ENCODE measurements at regions of chr6 and their contacts with region 1.

Region 1: GRCh38 chr6:27177485-27178406 is 69.8 kb upstream of the PRSS16 start:
- DNase-seq: peak; percentile 88
- H3K4me3 ChIP-seq: peak overlapping the region; percentile 34 to 94 (median 77)
- H3K27ac ChIP-seq: peak overlapping the region; percentile 41
- H3K4me1 ChIP-seq: no peaks in the 10 kb centered on the region
- H3K27me3 ChIP-seq: peaks cover 8 to 18% of the 10 kb centered on the region in 2 experiments
- CTCF ChIP-seq: peak; percentile 45 to 60
- POLR2A ChIP-seq: no peak

Region 2: DNA sequence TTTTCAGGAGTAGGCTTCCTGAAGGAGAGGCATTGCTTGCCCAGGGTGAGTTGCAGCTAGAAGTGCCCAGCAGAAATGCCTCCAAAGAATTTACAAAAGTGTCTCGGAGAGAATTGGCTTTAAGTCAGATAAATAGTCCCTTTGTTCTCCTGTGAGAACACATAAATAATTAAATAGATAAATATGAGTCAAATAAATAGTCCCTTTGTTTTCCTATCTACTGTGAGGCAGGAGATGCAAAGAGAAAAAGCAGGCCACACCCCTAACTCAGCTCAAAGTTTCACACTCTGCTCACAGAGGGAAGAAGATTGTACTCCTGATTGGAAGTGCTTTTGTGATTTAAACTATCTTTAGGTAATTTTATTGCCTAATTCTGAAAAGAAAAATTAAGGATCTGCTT is 110.9 kb before region 1 on chr6:
- CTCF ChIA-PET with region 1: no interaction called
- POLR2A ChIA-PET with region 1: no interaction called
- dilution Hi-C with region 1: no loop called
- intact Hi-C with region 1: no loop called
- DNase-seq: no peak
- H3K4me3 ChIP-seq: no peak overlapping the region
- H3K27ac ChIP-seq: no peak overlapping the region
- H3K4me1 ChIP-seq: no peaks in the 10 kb centered on the region
- H3K27me3 ChIP-seq: peaks cover 6 to 8% of the 10 kb centered on the region in 2 experiments
- CTCF ChIP-seq: no peak
- POLR2A ChIP-seq: no peak

Region 3: DNA sequence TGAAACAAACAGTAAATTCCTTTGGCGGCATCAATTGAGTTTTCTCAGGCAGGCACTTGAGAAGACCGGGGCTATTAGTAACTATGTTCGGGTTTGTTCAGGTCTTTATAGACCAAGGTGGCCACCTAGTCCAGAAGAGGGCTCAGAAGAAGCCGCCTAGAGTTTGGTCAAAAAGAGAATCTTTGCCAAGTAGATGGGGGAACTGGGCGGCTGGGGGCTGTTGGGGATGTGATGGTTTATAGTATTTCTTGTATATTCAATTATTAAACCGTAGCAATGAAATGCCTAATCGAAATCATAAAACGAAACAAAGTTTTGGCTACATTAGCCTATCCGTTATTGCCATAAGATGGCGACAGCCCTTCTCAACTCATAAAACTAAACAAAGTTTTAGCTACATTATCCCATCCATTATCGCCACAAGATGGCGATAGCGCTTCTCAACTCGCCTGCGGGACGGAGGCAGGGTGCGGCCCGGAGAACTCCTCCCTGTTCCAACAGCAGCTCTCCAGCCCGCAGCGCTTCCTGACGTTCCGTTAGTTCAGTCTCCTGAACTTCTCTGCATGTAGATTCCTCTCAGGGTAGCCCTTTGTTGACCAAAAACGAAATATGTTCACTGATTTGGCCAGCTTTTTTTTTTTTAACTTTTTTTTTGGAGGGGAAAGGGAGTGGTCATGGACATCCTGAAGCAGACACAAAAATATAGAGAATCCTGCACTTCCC is 50.8 kb before region 1 on chr6:
- CTCF ChIA-PET with region 1: interaction called, 11 read pairs
- POLR2A ChIA-PET with region 1: interaction called, 4 read pairs
- dilution Hi-C with region 1: no loop called
- intact Hi-C with region 1: loop called (anchors 2 kb)
- DNase-seq: peak; percentile 92
- H3K4me3 ChIP-seq: peak overlapping the region in 2 of 3 experiments; percentile 24 to 28
- H3K27ac ChIP-seq: no peak overlapping the region
- H3K4me1 ChIP-seq: peaks cover 10% of the 10 kb centered on the region
- H3K27me3 ChIP-seq: no peaks in the 10 kb centered on the region
- CTCF ChIP-seq: peak; percentile 71 to 73
- POLR2A ChIP-seq: peak; percentile 46

Region 4: DNA sequence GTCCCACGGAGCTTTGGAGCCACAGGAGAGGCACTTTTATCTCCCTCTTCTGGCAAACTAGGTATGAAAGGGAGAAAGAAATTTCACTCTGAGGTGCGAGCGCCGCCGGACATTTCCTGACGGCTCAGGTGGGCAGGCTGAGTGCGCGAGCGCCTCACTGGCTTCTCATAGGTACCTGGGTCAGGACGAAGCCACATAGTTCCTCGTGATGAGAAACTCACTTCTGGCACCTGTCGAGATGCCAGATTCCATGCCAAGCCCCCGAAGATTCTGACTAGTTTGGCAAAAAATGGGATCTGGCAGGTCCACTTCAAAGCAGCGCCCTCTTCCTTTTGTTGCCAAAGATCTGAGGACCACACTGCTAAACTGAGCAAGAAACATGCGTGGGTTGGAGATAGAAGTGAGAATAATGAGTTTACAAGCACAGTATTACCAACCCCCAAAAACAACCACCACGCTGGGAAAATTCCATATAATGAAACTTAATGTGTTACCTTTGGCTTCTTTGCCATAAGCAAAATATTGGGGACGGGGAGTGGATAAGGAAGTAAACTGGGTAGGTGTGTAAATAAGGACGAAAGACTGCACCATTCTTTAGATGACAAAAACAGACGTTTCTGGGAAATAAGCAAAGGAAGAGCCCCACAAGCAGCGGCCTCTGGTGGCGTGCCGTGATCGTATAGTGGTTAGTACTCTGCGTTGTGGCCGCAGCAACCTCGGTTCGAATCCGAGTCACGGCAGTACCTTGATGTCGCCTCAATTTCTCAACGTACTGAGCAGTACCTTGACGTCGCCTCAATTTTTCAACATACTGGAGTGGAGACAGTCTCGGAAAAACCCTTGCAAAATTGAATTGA is 20.1 kb before region 1 on chr6:
- CTCF ChIA-PET with region 1: interaction called, 20 read pairs
- POLR2A ChIA-PET with region 1: no interaction called
- dilution Hi-C with region 1: no loop called
- intact Hi-C with region 1: loop called (anchors 1 kb)
- DNase-seq: peak; percentile 57
- H3K4me3 ChIP-seq: peak overlapping the region; percentile 30 to 64 (median 59)
- H3K27ac ChIP-seq: no peak overlapping the region
- H3K4me1 ChIP-seq: peaks cover 10% of the 10 kb centered on the region
- H3K27me3 ChIP-seq: peaks cover 8 to 11% of the 10 kb centered on the region in 2 experiments
- CTCF ChIP-seq: peak; percentile 42 to 63
- POLR2A ChIP-seq: no peak

Region 5: DNA sequence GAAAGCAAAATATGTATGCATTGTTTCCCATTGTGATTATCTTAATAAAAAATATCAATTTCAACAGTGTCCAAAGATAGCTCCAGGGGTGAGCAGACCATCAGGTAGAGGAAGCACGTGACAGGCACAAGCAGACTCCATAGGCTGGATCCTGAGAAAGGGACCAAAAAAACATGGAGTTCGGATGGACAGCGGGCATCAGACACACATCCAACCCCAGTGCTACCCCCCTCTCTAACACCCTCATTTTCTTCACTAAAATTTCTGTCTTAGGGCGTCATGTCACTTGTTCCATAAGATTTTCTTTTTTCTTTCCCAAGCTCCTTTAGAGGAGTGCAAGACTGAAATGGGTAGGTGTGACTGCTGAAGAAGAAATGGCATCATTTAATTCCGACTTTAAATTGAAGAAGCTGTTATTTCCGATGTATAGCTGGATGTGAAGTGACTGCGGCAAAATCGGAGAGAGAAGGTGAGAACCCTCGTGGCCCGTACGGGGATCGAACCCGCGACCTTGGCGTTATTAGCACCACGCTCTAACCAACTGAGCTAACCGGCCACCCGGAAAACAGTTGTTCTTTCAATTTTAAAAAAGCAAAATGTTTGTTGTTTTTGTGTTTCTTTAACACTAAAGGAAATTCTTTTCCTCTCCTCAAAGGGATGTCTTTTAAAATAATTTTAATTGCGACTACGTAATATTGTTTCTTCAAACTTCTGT is 59.5 kb after region 1 on chr6:
- CTCF ChIA-PET with region 1: no interaction called
- POLR2A ChIA-PET with region 1: no interaction called
- dilution Hi-C with region 1: no loop called
- intact Hi-C with region 1: loop called (anchors 5 kb)
- DNase-seq: peak; percentile 30
- H3K4me3 ChIP-seq: peak overlapping the region in 2 of 3 experiments; percentile 61 to 65
- H3K27ac ChIP-seq: no peak overlapping the region
- H3K4me1 ChIP-seq: peaks cover 12% of the 10 kb centered on the region
- H3K27me3 ChIP-seq: peaks cover 0 to 3% of the 10 kb centered on the region in 2 experiments
- CTCF ChIP-seq: no peak
- POLR2A ChIP-seq: no peak

Region 6: GRCh38 chr6:27479319-27480182 is 301.8 kb after region 1 on chr6:
- CTCF ChIA-PET with region 1: interaction called, 4 read pairs
- POLR2A ChIA-PET with region 1: no interaction called
- dilution Hi-C with region 1: no loop called
- intact Hi-C with region 1: loop called (anchors 2 kb)
- DNase-seq: peak; percentile 94
- H3K4me3 ChIP-seq: peak overlapping the region; percentile 78 to 93 (median 88)
- H3K27ac ChIP-seq: peak overlapping the region; percentile 82
- H3K4me1 ChIP-seq: peaks cover 7% of the 10 kb centered on the region
- H3K27me3 ChIP-seq: peaks cover 11 to 16% of the 10 kb centered on the region in 2 experiments
- CTCF ChIP-seq: no peak
- POLR2A ChIP-seq: no peak

Region 7: GRCh38 chr6:27503436-27504030 is 325.8 kb after region 1 on chr6:
- CTCF ChIA-PET with region 1: no interaction called
- POLR2A ChIA-PET with region 1: no interaction called
- dilution Hi-C with region 1: no loop called
- intact Hi-C with region 1: loop called (anchors 1 kb)
- DNase-seq: peak; percentile 83
- H3K4me3 ChIP-seq: peak overlapping the region; percentile 38 to 97 (median 95)
- H3K27ac ChIP-seq: peak overlapping the region; percentile 15
- H3K4me1 ChIP-seq: peaks cover 14% of the 10 kb centered on the region
- H3K27me3 ChIP-seq: peaks cover 5 to 11% of the 10 kb centered on the region in 2 experiments
- CTCF ChIP-seq: no peak
- POLR2A ChIP-seq: no peak

Region 8: DNA sequence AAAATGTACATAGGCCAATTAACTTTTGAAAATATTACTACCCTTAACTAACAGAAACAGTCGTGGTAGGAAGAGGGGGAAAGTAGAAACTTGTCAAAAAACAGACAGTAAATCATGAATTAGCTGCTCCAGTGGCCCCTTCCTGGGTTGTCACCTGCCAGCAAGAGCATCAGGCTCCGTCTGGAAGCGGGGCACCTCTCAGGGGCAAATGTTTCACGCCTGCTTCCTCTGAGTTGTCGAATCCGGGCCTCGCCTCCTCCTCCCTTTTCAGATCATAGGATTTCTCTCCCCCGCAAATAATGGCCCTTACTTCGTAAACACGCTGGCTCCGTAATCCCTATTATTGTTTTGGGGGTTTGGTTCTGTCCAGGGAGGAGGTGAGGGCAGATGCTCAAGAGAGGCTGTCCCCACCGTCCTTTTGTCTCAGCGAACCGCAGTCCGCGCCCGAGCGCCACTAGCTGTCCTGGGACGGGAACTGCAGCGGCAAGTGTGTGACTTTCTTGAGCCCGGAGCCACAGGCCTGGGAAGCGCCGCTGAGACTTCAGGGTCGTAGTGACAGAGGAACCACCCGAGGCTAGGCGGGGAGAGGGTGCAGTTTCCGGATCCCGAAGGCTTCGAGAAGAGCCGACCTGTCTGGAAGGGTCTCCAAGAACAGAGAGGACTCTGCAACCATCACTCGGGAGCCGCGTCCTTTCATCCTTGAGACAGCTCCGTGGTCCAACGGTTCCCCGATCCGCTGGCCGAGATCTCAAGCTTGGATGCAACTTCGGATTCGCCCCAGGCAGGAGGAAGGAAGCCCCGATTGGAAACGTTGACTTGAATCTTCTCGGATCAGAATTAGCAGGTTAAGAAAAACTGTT is 509.6 kb after region 1 on chr6:
- CTCF ChIA-PET with region 1: no interaction called
- POLR2A ChIA-PET with region 1: no interaction called
- dilution Hi-C with region 1: no loop called
- intact Hi-C with region 1: loop called (anchors 1 kb)
- DNase-seq: peak; percentile 75
- H3K4me3 ChIP-seq: peak overlapping the region; percentile 33 to 77 (median 62)
- H3K27ac ChIP-seq: no peak overlapping the region
- H3K4me1 ChIP-seq: peaks cover 3% of the 10 kb centered on the region
- H3K27me3 ChIP-seq: peaks cover 0 to 2% of the 10 kb centered on the region in 2 experiments
- CTCF ChIP-seq: peak; percentile 57 to 75
- POLR2A ChIP-seq: no peak

Region 9: DNA sequence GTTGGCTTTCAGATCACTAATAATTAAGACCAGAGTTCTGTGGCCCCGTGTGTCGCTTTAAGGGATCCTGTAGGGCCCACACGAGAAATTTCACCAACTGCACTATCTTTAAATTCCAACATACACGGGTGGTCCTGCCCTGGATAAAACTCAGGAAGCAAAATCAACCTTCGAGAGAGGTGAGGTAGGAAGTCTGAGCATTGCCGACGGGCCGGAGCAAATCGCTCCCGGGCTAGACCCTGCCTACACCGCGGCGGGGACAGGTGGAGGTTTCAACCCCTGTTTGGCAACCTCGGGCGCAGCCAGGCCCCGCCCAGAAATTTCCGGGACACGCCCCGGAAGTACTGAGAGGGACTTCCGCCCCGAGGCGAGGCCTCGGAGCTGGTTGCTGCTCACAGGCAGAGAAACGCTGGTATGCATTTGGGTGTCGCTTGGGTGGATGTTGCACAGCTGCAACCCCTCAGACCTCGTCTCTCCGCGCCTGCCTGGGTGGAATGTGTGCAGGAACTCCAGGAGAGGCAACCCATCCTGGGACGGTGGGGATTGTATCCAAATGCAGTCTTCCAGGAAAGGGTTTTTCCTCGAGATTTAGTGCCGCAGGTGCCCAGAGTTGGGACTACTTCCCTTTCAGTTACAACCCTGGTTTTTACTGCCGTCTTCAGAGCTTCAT is 983.8 kb after region 1 on chr6:
- CTCF ChIA-PET with region 1: no interaction called
- POLR2A ChIA-PET with region 1: no interaction called
- dilution Hi-C with region 1: no loop called
- intact Hi-C with region 1: no loop called
- DNase-seq: peak; percentile 16
- H3K4me3 ChIP-seq: peak overlapping the region; percentile 13 to 52 (median 26)
- H3K27ac ChIP-seq: no peak overlapping the region
- H3K4me1 ChIP-seq: peaks cover 6% of the 10 kb centered on the region
- H3K27me3 ChIP-seq: peaks cover 0 to under 1% of the 10 kb centered on the region in 2 experiments
- CTCF ChIP-seq: no peak
- POLR2A ChIP-seq: peak; percentile 50

Measured in endothelial cell of umbilical vein (primary cell).